Esophagus muscularis mucosa (tissue), 4 donors: ENCODE measurements at regions of chr7 and their contacts with region 1.

Region 1: GRCh38 chr7:152341039-152341913 is 94.5 kb downstream of the KMT2C start:
- DNase-seq: no peak
- H3K4me3 ChIP-seq: no peak overlapping the region
- H3K27ac ChIP-seq: peak overlapping the region in 2 of 4 donors; percentile 10
- H3K4me1 ChIP-seq: peaks cover 13 to 60% (median 51%) of the 10 kb centered on the region in 4 donors
- H3K27me3 ChIP-seq: no peaks in the 10 kb centered on the region
- CTCF ChIP-seq: peak; percentile 38 to 52 (median 40)
- EP300 ChIP-seq: no peak
- POLR2A ChIP-seq: no peak

Region 2: DNA sequence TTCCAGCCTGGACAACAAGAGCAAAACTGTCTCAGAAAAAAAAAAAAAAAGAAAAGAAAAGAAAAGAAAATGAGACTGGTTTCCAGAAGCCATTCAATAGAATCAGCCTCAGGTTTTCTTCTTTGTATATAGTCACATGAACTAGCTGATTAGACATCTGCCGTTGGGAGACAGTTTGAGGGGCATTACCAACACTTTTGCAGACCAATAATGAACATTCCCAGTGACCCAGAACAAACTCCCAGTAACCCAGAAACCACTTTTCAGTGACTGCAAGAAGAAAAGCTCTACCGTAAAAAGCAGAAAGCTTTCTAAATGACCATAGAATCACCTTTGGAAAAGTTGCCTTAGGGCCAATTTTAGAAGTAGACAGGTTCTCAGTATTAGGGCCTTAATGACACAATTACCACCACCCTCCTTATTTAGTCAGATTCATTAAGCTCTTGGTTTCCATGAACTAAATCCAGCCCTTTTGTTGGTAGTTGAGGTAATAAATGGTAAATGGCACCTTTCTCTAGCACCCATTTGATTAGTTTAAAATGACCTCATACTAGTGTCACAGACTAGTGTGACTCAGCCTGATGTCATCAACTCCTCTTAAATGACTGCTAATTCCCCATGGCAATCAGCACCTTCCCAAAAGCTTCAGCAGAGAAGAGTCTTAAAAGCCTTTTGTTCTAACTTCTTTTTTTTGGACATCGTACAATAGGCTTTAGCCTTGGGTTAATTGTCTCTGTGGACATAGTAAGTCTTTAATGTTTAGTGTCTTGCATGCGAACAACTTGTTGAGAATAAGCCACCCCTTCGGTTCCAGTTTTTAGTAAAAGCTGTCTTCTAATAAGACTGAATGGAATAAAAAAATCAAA is 368.2 kb after region 1 on chr7:
- intact Hi-C with region 1: loop called (anchors 5 kb)
- DNase-seq: no peak
- H3K4me3 ChIP-seq: no peak overlapping the region
- H3K27ac ChIP-seq: no peak overlapping the region
- H3K4me1 ChIP-seq: peaks cover 0 to 4% (median 0%) of the 10 kb centered on the region in 4 donors
- H3K27me3 ChIP-seq: no peaks in the 10 kb centered on the region
- CTCF ChIP-seq: no peak
- EP300 ChIP-seq: no peak
- POLR2A ChIP-seq: no peak

Region 3: DNA sequence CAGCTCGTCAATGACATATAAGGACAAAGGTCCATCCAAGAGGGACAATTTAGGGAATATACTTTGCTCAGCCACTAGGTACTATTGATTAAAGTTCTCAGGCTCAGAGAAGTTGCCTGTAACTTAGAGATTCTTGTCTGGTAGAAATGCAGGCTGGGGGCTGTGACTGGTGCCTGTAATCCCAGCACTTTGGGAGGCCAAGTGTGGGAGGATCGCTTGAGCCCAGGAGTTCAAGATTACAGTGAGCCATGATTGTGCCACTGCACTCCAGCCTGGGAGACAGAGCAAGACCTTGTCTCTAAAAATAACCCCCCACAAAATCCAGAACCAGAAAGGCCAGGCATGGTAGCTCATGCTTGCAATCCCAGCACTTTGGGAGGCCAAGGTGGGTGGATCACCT is 382.1 kb after region 1 on chr7:
- intact Hi-C with region 1: no loop called
- DNase-seq: no peak
- H3K4me3 ChIP-seq: no peak overlapping the region
- H3K27ac ChIP-seq: no peak overlapping the region
- H3K4me1 ChIP-seq: no peaks in the 10 kb centered on the region
- H3K27me3 ChIP-seq: no peaks in the 10 kb centered on the region
- CTCF ChIP-seq: no peak
- EP300 ChIP-seq: no peak
- POLR2A ChIP-seq: no peak